ENCODE measurements at regions of chr14 and their contacts with region 1.

Region 1: GRCh38 chr14:64880221-64881121 is 764 bp upstream of the SPTB start:
- DNase-seq: peak in 1 of 2 experiments; percentile 67
- H3K4me3 ChIP-seq: peak overlapping the region; percentile 91
- H3K27ac ChIP-seq: no peak overlapping the region
- H3K4me1 ChIP-seq: peaks cover 4% of the 10 kb centered on the region; the same call in 1 of the 2 replicates
- H3K27me3 ChIP-seq: peaks cover 72% of the 10 kb centered on the region
- CTCF ChIP-seq: no peak

Region 2: DNA sequence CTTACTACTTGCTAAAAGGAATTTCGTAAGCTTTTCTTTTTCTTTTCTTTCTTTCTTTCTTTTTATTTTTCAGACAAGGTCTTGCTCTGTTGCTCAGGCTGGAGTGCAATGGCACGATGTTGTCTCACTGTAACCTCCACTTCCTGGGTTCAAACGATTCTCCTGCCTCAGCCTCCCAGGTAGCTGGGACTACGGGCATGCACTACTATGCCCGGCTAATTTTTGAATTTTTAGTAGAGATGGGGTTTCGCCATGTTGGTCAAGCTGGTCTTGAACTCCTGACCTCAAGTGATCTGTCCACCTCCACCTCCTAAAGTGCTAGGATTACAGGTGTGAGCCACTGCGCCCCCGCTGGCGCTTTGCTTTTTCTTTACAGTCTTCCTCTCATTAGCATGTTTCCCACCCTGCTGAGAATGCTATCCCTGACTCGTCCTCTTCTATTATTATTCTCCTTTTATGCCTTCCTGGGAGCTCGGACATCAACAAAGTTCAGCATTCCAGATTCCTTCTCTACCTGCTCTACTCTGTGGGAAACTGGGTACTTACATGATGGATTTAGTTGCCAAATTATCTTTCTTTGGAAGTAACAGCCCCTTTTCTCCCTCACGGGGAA is 489.3 kb before region 1 on chr14:
- CTCF ChIA-PET with region 1: no interaction called
- POLR2A ChIA-PET with region 1: no interaction called
- intact Hi-C with region 1: no loop called
- DNase-seq: no peak
- H3K4me3 ChIP-seq: no peak overlapping the region
- H3K27ac ChIP-seq: no peak overlapping the region
- H3K4me1 ChIP-seq: peaks cover 19% of the 10 kb centered on the region
- H3K27me3 ChIP-seq: no peaks in the 10 kb centered on the region
- CTCF ChIP-seq: no peak

Region 3: DNA sequence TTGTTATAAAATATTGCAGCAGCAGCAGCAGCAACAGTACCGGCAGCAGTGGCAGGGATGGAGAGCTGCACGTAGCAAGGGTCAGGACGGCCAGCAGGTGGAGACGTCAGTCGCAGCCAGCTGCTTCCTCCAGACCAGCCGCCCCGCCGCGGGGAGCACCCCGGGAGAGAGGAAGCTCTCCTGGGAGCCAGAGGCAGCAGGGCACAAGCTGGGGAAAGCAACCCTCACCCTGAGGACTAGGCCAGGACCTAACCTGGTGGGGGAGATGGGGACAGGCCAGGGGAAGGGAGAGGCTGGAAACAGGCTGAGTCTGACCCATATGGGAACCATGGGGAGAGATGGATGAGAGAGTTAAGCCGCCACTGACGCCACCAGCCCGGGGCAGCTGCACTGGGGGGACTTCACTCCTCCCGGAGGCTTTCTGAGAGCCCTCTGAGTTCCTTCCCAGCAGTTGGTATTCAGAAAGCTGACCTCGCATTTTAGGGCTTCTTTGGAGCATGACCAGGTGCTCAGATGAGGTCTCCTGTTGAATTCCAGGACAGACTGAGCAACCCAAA is 57.1 kb before region 1 on chr14:
- CTCF ChIA-PET with region 1: interaction called, 5 read pairs
- POLR2A ChIA-PET with region 1: no interaction called
- intact Hi-C with region 1: loop called (anchors 2 kb)
- DNase-seq: peak; percentile 56 to 74
- H3K4me3 ChIP-seq: no peak overlapping the region; the same call in 1 of the 2 replicates
- H3K27ac ChIP-seq: no peak overlapping the region
- H3K4me1 ChIP-seq: no peaks in the 10 kb centered on the region
- H3K27me3 ChIP-seq: peaks cover 10% of the 10 kb centered on the region; the same call in 1 of the 2 replicates
- CTCF ChIP-seq: peak; percentile 90